CD8-positive, alpha-beta T cell (primary cell): ENCODE measurements at regions of chr1 and their contacts with region 1.

Region 1: GRCh38 chr1:156860113-156860627 is 495 bp upstream of the NTRK1 start:
- DNase-seq: peak in 8 of 9 experiments; percentile 47 to 78 (median 63)
- ATAC-seq: peak; percentile 70
- H3K4me3 ChIP-seq: peak overlapping the region; percentile 54 to 73
- H3K4me3 Mint-ChIP-seq: peak overlapping the region; percentile 77
- H3K27ac ChIP-seq: no peak overlapping the region
- H3K27ac Mint-ChIP-seq: peak overlapping the region; percentile 14
- H3K4me1 ChIP-seq: peaks cover 27% of the 10 kb centered on the region
- H3K4me1 Mint-ChIP-seq: peaks cover 25% of the 10 kb centered on the region
- H3K27me3 ChIP-seq: peaks cover 42 to 44% of the 10 kb centered on the region in 2 experiments
- H3K27me3 Mint-ChIP-seq: peaks cover 51% of the 10 kb centered on the region
- CTCF ChIP-seq: peak; percentile 79

Region 2: DNA sequence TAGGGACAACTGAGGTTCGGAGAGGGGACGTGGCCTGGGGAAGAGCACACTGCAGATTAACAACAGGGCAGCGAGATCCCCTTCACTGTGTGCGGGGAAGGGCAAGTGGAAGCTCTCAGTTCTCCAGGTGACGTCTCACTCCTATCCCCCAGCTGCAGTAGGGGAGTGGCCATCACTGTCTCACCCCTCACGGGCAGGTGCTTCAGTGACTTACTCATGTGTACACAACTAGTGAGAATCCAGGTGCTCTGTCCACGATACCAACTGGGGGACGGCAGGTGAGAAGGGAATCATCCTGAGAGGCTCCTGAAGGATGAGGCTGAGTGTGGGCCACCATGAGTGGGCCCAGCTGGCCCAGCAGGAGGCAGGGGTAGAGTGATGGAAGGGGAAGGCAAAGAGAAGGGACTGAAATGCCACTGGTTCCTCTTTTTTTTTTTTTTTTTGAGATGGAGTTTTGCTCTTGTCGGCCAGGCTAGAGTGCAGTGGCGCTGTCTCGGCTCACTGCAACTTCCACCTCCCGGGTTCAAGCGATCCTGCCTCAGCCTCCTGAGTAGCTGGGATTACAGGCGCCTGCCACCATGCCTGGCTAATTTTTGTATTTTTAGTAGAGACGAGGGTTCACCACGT is 465.2 kb before region 1 on chr1:
- CTCF ChIA-PET with region 1: no interaction called
- POLR2A ChIA-PET with region 1: no interaction called
- intact Hi-C with region 1: no loop called
- DNase-seq: no peak
- ATAC-seq: no peak
- H3K4me3 ChIP-seq: no peak overlapping the region
- H3K4me3 Mint-ChIP-seq: no peak overlapping the region
- H3K27ac ChIP-seq: no peak overlapping the region
- H3K27ac Mint-ChIP-seq: no peak overlapping the region
- H3K4me1 ChIP-seq: no peaks in the 10 kb centered on the region
- H3K4me1 Mint-ChIP-seq: no peaks in the 10 kb centered on the region
- H3K27me3 ChIP-seq: no peaks in the 10 kb centered on the region
- H3K27me3 Mint-ChIP-seq: peaks cover 10% of the 10 kb centered on the region
- CTCF ChIP-seq: no peak

Region 3: DNA sequence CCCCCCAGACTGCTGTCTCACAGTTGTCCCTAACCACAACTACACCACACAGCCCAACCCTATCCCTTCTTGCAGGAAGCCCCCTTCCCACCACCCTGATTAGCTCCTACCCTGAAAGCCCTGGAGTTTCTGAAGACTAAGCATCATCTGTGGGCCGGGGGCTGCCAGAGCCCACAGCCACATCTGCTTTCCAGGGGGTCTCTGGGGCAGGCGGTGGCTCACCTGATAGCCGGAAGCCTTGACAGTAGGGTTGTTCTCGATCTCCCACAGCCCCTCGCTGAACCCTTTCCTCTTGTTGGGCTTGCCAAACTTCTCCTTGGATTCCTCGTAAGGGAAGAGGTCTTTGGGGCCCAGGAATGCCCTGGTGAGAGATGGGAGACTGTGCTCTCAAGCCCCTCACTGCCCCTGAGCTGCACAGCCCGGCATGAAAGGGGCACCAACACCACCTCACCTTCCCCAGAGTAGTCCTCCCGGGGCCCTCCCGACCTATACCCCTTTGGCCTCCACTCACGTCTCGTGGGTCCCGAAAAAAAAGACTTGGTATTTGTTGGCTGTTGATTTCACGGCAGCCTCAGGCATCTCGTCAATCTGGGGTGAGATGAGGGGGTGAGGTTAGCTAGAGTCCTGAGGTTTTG is 115.3 kb before region 1 on chr1:
- CTCF ChIA-PET with region 1: no interaction called
- POLR2A ChIA-PET with region 1: no interaction called
- intact Hi-C with region 1: no loop called
- DNase-seq: no peak
- ATAC-seq: no peak
- H3K4me3 ChIP-seq: no peak overlapping the region
- H3K4me3 Mint-ChIP-seq: no peak overlapping the region
- H3K27ac ChIP-seq: no peak overlapping the region
- H3K27ac Mint-ChIP-seq: peak overlapping the region; percentile 89
- H3K4me1 ChIP-seq: peaks cover 51% of the 10 kb centered on the region
- H3K4me1 Mint-ChIP-seq: peaks cover 65% of the 10 kb centered on the region
- H3K27me3 ChIP-seq: no peaks in the 10 kb centered on the region
- H3K27me3 Mint-ChIP-seq: no peaks in the 10 kb centered on the region
- CTCF ChIP-seq: no peak

Region 4: GRCh38 chr1:156797212-156797871 is 62.8 kb before region 1 on chr1:
- CTCF ChIA-PET with region 1: interaction called, 260 read pairs
- POLR2A ChIA-PET with region 1: interaction called, 13 read pairs
- intact Hi-C with region 1: loop called (anchors 1 kb)
- DNase-seq: peak in 7 of 9 experiments; percentile 48 to 84 (median 68)
- ATAC-seq: peak; percentile 91
- H3K4me3 ChIP-seq: no peak overlapping the region
- H3K4me3 Mint-ChIP-seq: no peak overlapping the region
- H3K27ac ChIP-seq: no peak overlapping the region
- H3K27ac Mint-ChIP-seq: no peak overlapping the region
- H3K4me1 ChIP-seq: no peaks in the 10 kb centered on the region
- H3K4me1 Mint-ChIP-seq: peaks cover 8% of the 10 kb centered on the region
- H3K27me3 ChIP-seq: no peaks in the 10 kb centered on the region
- H3K27me3 Mint-ChIP-seq: no peaks in the 10 kb centered on the region
- CTCF ChIP-seq: peak; percentile 87

Region 5: GRCh38 chr1:156804572-156805243 is 55.5 kb before region 1 on chr1:
- CTCF ChIA-PET with region 1: interaction called, 260 read pairs
- POLR2A ChIA-PET with region 1: interaction called, 13 read pairs
- intact Hi-C with region 1: no loop called
- DNase-seq: peak in 2 of 9 experiments; percentile 18 to 23
- ATAC-seq: no peak
- H3K4me3 ChIP-seq: no peak overlapping the region
- H3K4me3 Mint-ChIP-seq: no peak overlapping the region
- H3K27ac ChIP-seq: peak overlapping the region in 1 of 2 experiments; percentile 37
- H3K27ac Mint-ChIP-seq: peak overlapping the region; percentile 70
- H3K4me1 ChIP-seq: peaks cover 9% of the 10 kb centered on the region
- H3K4me1 Mint-ChIP-seq: peaks cover 30% of the 10 kb centered on the region
- H3K27me3 ChIP-seq: no peaks in the 10 kb centered on the region
- H3K27me3 Mint-ChIP-seq: no peaks in the 10 kb centered on the region
- CTCF ChIP-seq: no peak

Region 6: DNA sequence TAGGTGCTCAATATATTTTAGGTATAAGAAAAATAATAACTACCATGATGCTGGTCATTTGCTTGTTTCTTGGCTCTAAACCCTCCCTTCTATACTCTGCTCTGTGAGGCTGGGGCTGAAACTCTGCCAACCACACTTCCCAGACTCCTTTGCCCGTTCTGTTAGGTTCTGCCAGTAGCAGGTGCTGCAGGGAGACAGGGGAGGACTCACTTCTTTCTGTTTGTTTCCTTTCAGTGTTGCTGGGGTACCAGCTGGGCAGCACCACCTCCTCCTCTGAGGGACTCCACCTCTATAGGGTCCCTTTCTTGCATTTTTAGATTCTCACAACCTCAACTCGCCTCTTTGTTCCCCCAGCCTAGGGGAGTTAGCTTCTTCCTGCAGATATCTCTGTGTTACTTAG is 26.6 kb before region 1 on chr1:
- CTCF ChIA-PET with region 1: interaction called, 227 read pairs
- POLR2A ChIA-PET with region 1: interaction called, 16 read pairs
- intact Hi-C with region 1: no loop called
- DNase-seq: peak in 3 of 9 experiments; percentile 40 to 70 (median 40)
- ATAC-seq: peak; percentile 83
- H3K4me3 ChIP-seq: no peak overlapping the region
- H3K4me3 Mint-ChIP-seq: no peak overlapping the region
- H3K27ac ChIP-seq: no peak overlapping the region
- H3K27ac Mint-ChIP-seq: no peak overlapping the region
- H3K4me1 ChIP-seq: no peaks in the 10 kb centered on the region
- H3K4me1 Mint-ChIP-seq: peaks cover 4% of the 10 kb centered on the region
- H3K27me3 ChIP-seq: no peaks in the 10 kb centered on the region
- H3K27me3 Mint-ChIP-seq: peaks cover 7% of the 10 kb centered on the region
- CTCF ChIP-seq: no peak

Region 7: DNA sequence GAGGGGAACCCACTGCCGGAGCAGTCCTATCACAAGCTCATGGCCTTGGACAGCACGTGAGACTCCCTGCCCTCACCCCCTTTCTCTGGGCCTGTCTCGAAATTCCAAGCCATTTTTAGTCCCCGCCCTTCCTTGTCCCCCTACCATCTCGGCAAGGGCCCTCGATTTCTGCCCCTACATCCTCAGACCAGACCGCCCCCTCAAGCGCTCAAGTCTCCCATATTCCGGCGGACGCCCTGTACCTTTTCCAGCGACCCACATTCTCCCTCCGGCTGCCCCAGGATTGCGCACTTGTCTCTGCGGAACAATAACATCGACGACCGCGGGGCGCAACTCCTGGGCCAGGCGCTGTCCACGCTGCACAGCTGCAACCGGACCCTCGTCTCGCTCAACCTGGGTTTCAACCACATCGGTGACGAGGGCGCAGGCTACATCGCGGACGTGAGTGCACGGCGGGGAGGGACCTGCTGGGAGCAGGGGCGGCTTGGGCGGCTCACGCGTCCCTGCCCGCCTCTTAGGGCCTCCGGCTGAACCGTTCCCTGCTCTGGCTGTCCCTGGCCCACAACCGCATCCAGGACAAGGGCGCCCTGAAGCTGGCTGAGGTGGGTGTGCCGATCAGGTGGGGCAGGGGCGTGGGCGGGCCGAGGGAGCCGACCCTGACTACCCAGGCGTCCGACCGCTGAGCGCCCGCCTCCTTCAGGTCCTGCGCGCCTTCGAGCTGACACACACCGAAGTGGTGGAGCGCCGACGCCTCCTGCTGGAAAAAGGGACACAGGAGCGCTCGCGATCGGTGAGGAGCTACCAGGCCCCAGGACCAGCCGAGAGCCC is 67.3 kb after region 1 on chr1:
- CTCF ChIA-PET with region 1: interaction called, 10 read pairs
- POLR2A ChIA-PET with region 1: no interaction called
- intact Hi-C with region 1: no loop called
- DNase-seq: peak; percentile 25 to 74 (median 61)
- ATAC-seq: peak; percentile 80
- H3K4me3 ChIP-seq: peak overlapping the region in 1 of 2 experiments; percentile 20
- H3K4me3 Mint-ChIP-seq: no peak overlapping the region
- H3K27ac ChIP-seq: no peak overlapping the region
- H3K27ac Mint-ChIP-seq: no peak overlapping the region
- H3K4me1 ChIP-seq: peaks cover 16% of the 10 kb centered on the region
- H3K4me1 Mint-ChIP-seq: peaks cover 22% of the 10 kb centered on the region
- H3K27me3 ChIP-seq: peaks cover 37 to 43% of the 10 kb centered on the region in 2 experiments
- H3K27me3 Mint-ChIP-seq: peaks cover 67% of the 10 kb centered on the region
- CTCF ChIP-seq: no peak